ENCODE measurements at regions of chrX and their contacts with region 1.

Region 1: DNA sequence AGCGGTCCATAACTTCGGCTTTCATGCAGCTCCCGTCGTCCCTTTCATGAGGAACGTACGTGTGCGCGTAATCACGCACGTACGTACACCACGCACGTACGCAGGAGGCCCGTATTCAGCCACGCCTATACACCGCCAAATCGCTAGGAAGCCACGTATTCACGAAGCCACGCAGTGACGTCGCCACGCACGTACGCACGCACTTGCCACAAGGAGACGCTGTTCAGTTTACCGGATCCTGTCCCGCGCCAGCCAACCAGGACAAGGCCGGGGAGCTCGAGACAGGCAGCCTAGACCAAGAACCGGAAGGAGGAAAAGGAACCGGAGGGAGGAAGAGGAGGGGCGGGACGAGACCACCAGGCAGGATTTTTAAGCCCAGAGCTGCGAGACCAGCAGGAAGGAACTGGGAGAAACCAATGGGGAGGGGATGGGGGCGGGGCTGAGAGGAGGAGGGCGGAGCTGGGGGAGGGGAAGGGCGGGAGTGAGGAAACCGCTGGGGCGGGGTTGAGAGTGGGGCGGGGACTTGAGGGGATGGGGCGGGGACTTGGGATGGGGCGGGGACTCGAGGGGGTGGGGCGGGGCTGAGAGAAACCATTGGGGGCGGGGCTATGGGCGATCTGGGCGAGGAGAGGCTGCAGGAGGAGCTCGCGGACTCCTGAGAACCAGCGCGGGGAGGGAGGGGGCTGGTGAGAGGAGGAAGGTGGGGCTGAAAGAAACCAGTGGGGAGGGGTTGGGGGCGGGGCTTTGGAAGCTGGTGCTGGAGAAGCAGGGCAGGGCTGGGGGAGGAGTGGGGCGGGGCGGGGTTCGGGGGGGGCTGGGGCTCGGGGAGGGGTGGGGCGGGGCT is at the start of gene EOLA2:
- DNase-seq: peak; percentile 97
- ATAC-seq: peak; percentile 86
- H3K4me3 ChIP-seq: peak within 1 kb of the TSS; percentile 95 to 99
- H3K27ac ChIP-seq: peak within 1 kb of the TSS; percentile 91
- H3K4me1 ChIP-seq: peaks cover 7% of the 10 kb centered on the region; the same call in 1 of the 2 replicates
- H3K27me3 ChIP-seq: no peaks in the 10 kb centered on the region
- CTCF ChIP-seq: peak; percentile 74
- total RNA-seq, gene EOLA2: 75.0 TPM

Region 2: GRCh38 chrX:149695871-149696270 is 242.8 kb before region 1 on chrX:
- CTCF ChIA-PET with region 1: no interaction called
- POLR2A ChIA-PET with region 1: interaction called, 10 read pairs
- in situ Hi-C with region 1: no loop called
- intact Hi-C with region 1: no loop called
- DNase-seq: no peak
- ATAC-seq: no peak
- H3K4me3 ChIP-seq: no peak overlapping the region
- H3K27ac ChIP-seq: no peak overlapping the region
- H3K4me1 ChIP-seq: no peaks in the 10 kb centered on the region
- H3K27me3 ChIP-seq: no peaks in the 10 kb centered on the region; the same call in 1 of the 2 replicates
- CTCF ChIP-seq: no peak

Region 3: GRCh38 chrX:150028692-150029091 is 90.0 kb after region 1 on chrX:
- CTCF ChIA-PET with region 1: no interaction called
- POLR2A ChIA-PET with region 1: no interaction called
- in situ Hi-C with region 1: no loop called
- intact Hi-C with region 1: no loop called
- DNase-seq: no peak
- ATAC-seq: no peak
- H3K4me3 ChIP-seq: no peak overlapping the region
- H3K27ac ChIP-seq: no peak overlapping the region
- H3K4me1 ChIP-seq: no peaks in the 10 kb centered on the region
- H3K27me3 ChIP-seq: no peaks in the 10 kb centered on the region
- CTCF ChIP-seq: no peak

Region 4: GRCh38 chrX:150879855-150880808 is 941.5 kb after region 1 on chrX:
- CTCF ChIA-PET with region 1: no interaction called
- POLR2A ChIA-PET with region 1: interaction called, 18 read pairs
- in situ Hi-C with region 1: no loop called
- intact Hi-C with region 1: no loop called
- DNase-seq: no peak
- ATAC-seq: no peak
- H3K4me3 ChIP-seq: no peak overlapping the region
- H3K27ac ChIP-seq: no peak overlapping the region
- H3K4me1 ChIP-seq: peaks cover 6% of the 10 kb centered on the region
- H3K27me3 ChIP-seq: no peaks in the 10 kb centered on the region
- CTCF ChIP-seq: no peak